B cell (primary cell): ENCODE measurements at regions of chr20 and their contacts with region 1.

Region 1: DNA sequence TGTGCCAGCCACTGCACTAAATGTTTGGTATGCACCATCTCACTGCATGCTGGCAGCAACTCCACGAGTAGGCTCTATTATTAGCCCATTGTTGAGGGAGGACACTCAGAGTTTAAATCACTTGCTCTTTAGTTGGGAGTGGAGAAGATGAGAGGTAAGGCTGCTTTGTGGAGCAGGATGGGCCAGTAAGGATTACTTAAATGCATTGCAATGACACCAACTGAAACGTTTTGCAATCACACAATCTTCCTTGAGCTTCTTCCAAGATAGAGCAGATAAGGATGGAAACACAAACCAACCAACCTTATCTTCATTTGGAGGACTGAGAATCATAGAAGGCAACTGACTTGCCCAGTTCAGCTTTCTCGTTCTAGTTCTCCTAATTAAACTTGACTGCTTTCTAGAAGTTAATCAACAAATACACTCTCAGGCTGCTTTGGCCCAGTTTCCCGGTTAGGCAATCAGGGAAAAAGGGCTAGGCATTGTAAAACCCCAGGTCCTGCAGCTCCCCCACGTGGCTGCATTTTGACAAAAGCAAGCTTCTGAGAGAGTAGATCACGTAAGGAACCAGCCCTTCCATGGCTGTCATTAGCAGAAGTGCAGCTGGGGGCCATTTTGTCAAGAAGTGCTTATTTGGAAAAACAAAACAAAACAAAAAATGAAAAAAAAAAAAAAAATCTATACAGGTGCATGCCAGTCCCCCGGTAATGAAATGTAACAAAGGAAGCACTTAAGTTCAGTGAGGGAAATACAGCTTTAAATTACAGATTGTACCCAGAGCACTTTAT is 130.6 kb downstream of the BCAS1 start:
- DNase-seq: peak; percentile 87
- ATAC-seq: peak; percentile 68
- H3K4me3 ChIP-seq: peak overlapping the region in 4 of 5 experiments; percentile 5 to 40 (median 19)
- H3K4me3 Mint-ChIP-seq: peak overlapping the region; percentile 49
- H3K27ac ChIP-seq: peak overlapping the region in 1 of 2 donors; percentile 79
- H3K27ac Mint-ChIP-seq: peak overlapping the region; percentile 91
- H3K4me1 ChIP-seq: peaks cover 60 to 88% of the 10 kb centered on the region in 2 donors
- H3K4me1 Mint-ChIP-seq: peaks cover 86% of the 10 kb centered on the region
- H3K27me3 ChIP-seq: no peaks in the 10 kb centered on the region
- H3K27me3 Mint-ChIP-seq: no peaks in the 10 kb centered on the region
- CTCF ChIP-seq: peak; percentile 82

Region 2: GRCh38 chr20:52312132-52312729 is 1627.5 kb before region 1 on chr20:
- CTCF ChIA-PET with region 1: no interaction called
- POLR2A ChIA-PET with region 1: no interaction called
- intact Hi-C with region 1: loop called (anchors 10 kb)
- DNase-seq: peak; percentile 60
- ATAC-seq: no peak
- H3K4me3 ChIP-seq: no peak overlapping the region
- H3K4me3 Mint-ChIP-seq: no peak overlapping the region
- H3K27ac ChIP-seq: no peak overlapping the region
- H3K27ac Mint-ChIP-seq: no peak overlapping the region
- H3K4me1 ChIP-seq: no peaks in the 10 kb centered on the region
- H3K4me1 Mint-ChIP-seq: no peaks in the 10 kb centered on the region
- H3K27me3 ChIP-seq: no peaks in the 10 kb centered on the region
- H3K27me3 Mint-ChIP-seq: peaks cover 35% of the 10 kb centered on the region
- CTCF ChIP-seq: peak; percentile 81

Region 3: DNA sequence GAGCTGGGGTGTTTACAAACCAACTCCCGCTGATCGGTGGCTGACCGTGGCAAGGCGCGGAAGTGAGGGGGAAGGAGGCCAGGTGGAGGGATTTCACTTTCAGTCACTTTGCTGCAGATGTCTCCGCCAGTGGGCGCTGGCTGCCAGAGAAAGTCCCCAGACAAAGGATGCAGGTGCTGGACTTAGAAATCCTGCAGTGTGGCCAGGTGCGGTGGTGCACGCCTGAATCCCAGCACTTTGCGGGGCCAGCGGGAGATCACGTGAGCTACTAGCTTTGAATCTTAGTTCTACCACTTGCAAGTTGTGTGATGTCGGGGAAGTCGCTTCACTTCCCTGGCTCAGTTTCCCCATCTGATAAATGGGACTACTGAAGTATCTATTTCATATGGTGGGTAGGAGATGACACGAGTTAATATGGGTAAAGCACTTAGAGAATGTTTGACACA is 526.6 kb before region 1 on chr20:
- CTCF ChIA-PET with region 1: interaction called, 15 read pairs
- POLR2A ChIA-PET with region 1: no interaction called
- intact Hi-C with region 1: no loop called
- DNase-seq: peak; percentile 72
- ATAC-seq: peak; percentile 56
- H3K4me3 ChIP-seq: peak overlapping the region in 1 of 5 experiments; percentile 10
- H3K4me3 Mint-ChIP-seq: peak overlapping the region; percentile 56
- H3K27ac ChIP-seq: no peak overlapping the region
- H3K27ac Mint-ChIP-seq: peak overlapping the region; percentile 0
- H3K4me1 ChIP-seq: peaks cover 0 to 8% of the 10 kb centered on the region in 2 donors
- H3K4me1 Mint-ChIP-seq: peaks cover 5% of the 10 kb centered on the region
- H3K27me3 ChIP-seq: peaks cover 0 to 4% (median 0%) of the 10 kb centered on the region in 4 experiments
- H3K27me3 Mint-ChIP-seq: no peaks in the 10 kb centered on the region
- CTCF ChIP-seq: peak; percentile 62

Region 4: GRCh38 chr20:53660078-53660909 is 279.5 kb before region 1 on chr20:
- CTCF ChIA-PET with region 1: interaction called, 12 read pairs
- POLR2A ChIA-PET with region 1: no interaction called
- intact Hi-C with region 1: no loop called
- DNase-seq: peak; percentile 52
- ATAC-seq: peak; percentile 46
- H3K4me3 ChIP-seq: peak overlapping the region; percentile 46 to 77 (median 70)
- H3K4me3 Mint-ChIP-seq: peak overlapping the region; percentile 95
- H3K27ac ChIP-seq: peak overlapping the region; percentile 61 to 78
- H3K27ac Mint-ChIP-seq: peak overlapping the region; percentile 92
- H3K4me1 ChIP-seq: peaks cover 44 to 48% of the 10 kb centered on the region in 2 donors
- H3K4me1 Mint-ChIP-seq: peaks cover 59% of the 10 kb centered on the region
- H3K27me3 ChIP-seq: no peaks in the 10 kb centered on the region
- H3K27me3 Mint-ChIP-seq: no peaks in the 10 kb centered on the region
- CTCF ChIP-seq: no peak

Region 5: GRCh38 chr20:53839423-53840176 is 100.2 kb before region 1 on chr20:
- CTCF ChIA-PET with region 1: interaction called, 11 read pairs
- POLR2A ChIA-PET with region 1: interaction called, 7 read pairs
- intact Hi-C with region 1: loop called (anchors 5 kb)
- DNase-seq: peak; percentile 79
- ATAC-seq: peak; percentile 81
- H3K4me3 ChIP-seq: peak overlapping the region in 2 of 5 experiments; percentile 1 to 30
- H3K4me3 Mint-ChIP-seq: peak overlapping the region; percentile 86
- H3K27ac ChIP-seq: peak overlapping the region; percentile 69 to 78
- H3K27ac Mint-ChIP-seq: peak overlapping the region; percentile 96
- H3K4me1 ChIP-seq: peaks cover 62 to 71% of the 10 kb centered on the region in 2 donors
- H3K4me1 Mint-ChIP-seq: peaks cover 73% of the 10 kb centered on the region
- H3K27me3 ChIP-seq: no peaks in the 10 kb centered on the region
- H3K27me3 Mint-ChIP-seq: no peaks in the 10 kb centered on the region
- CTCF ChIP-seq: no peak

Region 6: GRCh38 chr20:53907968-53908751 is 31.6 kb before region 1 on chr20:
- CTCF ChIA-PET with region 1: interaction called, 593 read pairs
- POLR2A ChIA-PET with region 1: no interaction called
- intact Hi-C with region 1: no loop called
- DNase-seq: no peak
- ATAC-seq: no peak
- H3K4me3 ChIP-seq: no peak overlapping the region
- H3K4me3 Mint-ChIP-seq: peak overlapping the region; percentile 16
- H3K27ac ChIP-seq: no peak overlapping the region
- H3K27ac Mint-ChIP-seq: peak overlapping the region; percentile 53
- H3K4me1 ChIP-seq: peaks cover 0 to 43% of the 10 kb centered on the region in 2 donors
- H3K4me1 Mint-ChIP-seq: peaks cover 45% of the 10 kb centered on the region
- H3K27me3 ChIP-seq: no peaks in the 10 kb centered on the region
- H3K27me3 Mint-ChIP-seq: no peaks in the 10 kb centered on the region
- CTCF ChIP-seq: no peak

Region 7: DNA sequence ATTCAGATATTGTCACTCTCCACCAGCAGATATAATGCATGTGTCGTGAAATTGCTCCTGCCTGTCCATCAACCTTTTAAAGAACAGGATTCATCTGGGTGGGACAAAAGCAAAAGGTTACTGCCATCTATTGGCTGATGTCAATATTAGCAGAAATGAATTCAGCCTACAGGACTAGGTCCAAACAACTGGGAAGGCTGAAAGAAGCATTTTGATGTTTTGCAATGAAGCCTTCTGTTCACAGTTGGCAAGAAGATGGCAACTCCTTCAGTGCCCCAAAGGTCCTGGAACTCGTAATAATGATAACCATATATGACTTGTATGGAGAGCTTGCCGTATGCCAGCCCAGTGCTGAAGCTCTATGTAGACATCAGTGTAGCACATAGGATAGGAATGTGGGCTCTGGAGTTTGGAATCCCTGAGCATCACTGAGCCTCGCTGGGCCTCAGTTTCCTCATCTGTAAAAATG is 123.1 kb after region 1 on chr20:
- CTCF ChIA-PET with region 1: interaction called, 16 read pairs
- POLR2A ChIA-PET with region 1: no interaction called
- intact Hi-C with region 1: loop called (anchors 5 kb)
- DNase-seq: peak; percentile 56
- ATAC-seq: no peak
- H3K4me3 ChIP-seq: no peak overlapping the region
- H3K4me3 Mint-ChIP-seq: no peak overlapping the region
- H3K27ac ChIP-seq: no peak overlapping the region
- H3K27ac Mint-ChIP-seq: no peak overlapping the region
- H3K4me1 ChIP-seq: peaks cover 0 to 26% of the 10 kb centered on the region in 2 donors
- H3K4me1 Mint-ChIP-seq: peaks cover 31% of the 10 kb centered on the region
- H3K27me3 ChIP-seq: no peaks in the 10 kb centered on the region
- H3K27me3 Mint-ChIP-seq: no peaks in the 10 kb centered on the region
- CTCF ChIP-seq: peak; percentile 73